Mucosa of descending colon (tissue), 3 donors: ENCODE measurements at regions of chr1 and their contacts with region 1.

Region 1: GRCh38 chr1:154961497-154962262 is at the start of gene PYGO2:
- DNase-seq: peak; percentile 79 to 91 (median 90)
- ATAC-seq: peak; percentile 88
- H3K4me3 ChIP-seq: peak within 1 kb of the TSS; percentile 80
- H3K4me1 ChIP-seq: peaks cover 18% of the 10 kb centered on the region
- CTCF ChIP-seq: peak; percentile 67
- total RNA-seq, gene PYGO2: 22.8 to 34.3 (median 25.8) TPM

Region 2: DNA sequence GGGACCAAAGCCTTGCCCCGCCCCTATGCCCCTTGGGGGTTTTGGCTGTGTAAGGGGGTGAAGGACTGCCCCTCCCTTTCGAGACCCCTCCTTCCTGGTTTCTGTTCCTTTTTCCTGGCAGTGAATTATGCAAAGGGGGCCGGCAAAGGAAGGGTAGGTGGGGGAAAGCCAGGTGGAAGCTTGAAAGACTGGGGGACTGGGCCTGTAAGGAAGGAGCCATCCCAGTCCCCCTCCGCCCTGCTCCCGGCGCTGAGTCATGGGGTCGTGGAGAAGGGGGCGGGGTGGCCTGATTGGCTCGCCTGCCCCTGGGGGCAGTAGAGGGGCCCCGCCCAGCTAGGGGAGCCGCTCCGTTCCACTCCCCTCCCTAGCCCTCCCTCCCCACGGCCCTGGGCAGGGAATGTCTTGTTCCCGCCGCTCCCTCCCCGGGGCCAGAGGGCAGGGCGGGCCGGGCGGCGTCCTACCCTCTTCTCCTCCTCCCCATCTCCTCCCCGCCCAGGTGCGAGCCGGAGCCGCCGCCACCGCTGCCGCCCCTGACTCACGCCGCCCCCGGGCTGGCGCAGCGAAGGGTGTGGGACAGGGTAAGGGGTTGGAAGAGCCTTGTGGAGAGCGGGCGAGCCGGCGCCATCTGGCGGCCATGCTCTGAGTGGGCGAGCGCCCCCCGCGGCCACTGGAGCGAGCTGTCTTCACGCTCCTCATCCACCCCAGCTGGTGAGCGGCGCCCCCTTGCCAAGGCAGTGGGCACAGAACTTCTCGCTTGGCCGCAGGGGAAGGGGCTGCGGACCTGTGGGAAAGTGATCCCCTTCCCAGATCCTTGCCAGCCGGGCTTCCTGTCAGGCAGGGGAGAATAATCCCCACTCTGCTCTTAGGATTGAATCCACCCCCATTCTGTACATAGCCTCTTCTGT is 55.6 kb after region 1 on chr1:
- intact Hi-C with region 1: loop called in 1 of 2 experiments (anchors 10 kb)
- DNase-seq: peak; percentile 93 to 98 (median 96)
- ATAC-seq: peak; percentile 91
- H3K4me3 ChIP-seq: no peak overlapping the region
- H3K4me1 ChIP-seq: peaks cover 33% of the 10 kb centered on the region
- CTCF ChIP-seq: peak; percentile 88